Mammary epithelial cell (primary cell): ENCODE measurements at regions of chr14 and their contacts with region 1.

Region 1: DNA sequence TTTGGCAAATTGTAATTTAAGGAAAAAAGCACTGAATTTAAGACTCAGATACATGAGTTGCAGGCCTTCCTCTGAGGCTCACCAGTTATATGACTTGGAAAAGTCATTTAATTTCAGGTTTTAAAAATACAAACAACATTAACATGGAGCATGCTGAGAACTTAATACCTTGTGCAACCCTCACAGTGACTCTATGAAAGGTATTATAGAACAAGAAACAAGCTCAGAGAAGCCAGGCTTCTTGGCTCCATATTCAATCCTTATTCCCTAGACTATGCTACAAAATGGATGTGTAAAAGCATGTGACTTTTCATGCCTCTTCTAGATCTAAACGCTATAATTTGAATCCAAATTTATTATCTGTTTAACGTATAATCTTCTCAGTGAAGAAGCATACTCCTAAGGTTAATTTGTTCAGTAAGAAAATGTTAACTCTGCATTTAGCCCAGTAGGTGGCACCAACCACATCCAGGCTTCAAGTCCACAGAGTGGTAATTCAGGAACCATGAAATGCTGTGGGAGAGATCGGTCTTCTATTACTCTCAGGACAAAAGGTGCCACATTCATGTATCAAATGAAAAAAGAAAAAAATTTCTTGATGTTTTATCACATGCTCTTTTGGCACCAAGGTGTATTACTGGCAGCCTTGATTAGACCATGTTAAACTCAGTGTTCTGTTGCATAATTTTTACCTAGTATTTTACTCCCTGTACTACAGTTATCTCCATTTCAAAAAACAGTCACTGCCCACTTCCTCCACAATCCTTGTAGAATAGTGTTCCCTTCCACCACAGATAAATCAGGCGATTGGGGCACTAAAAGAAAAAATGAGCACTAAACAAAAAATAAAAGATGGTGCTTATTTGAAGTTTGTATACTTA is 9.3 kb downstream of the CCDC196 start:
- DNase-seq: peak; percentile 63
- H3K4me3 ChIP-seq: peak overlapping the region in 2 of 3 experiments; percentile 37 to 41
- H3K27ac ChIP-seq: peak overlapping the region; percentile 1
- H3K4me1 ChIP-seq: peaks cover 8% of the 10 kb centered on the region
- H3K27me3 ChIP-seq: no peaks in the 10 kb centered on the region
- CTCF ChIP-seq: peak; percentile 79 to 84

Region 2: GRCh38 chr14:66206554-66206953 is 288.9 kb before region 1 on chr14:
- CTCF ChIA-PET with region 1: no interaction called
- dilution Hi-C with region 1: no loop called
- in situ Hi-C with region 1: no loop called
- intact Hi-C with region 1: no loop called
- DNase-seq: no peak
- H3K4me3 ChIP-seq: no peak overlapping the region
- H3K27ac ChIP-seq: no peak overlapping the region
- H3K4me1 ChIP-seq: no peaks in the 10 kb centered on the region
- H3K27me3 ChIP-seq: peaks cover 2% of the 10 kb centered on the region
- CTCF ChIP-seq: no peak

Region 3: GRCh38 chr14:66507722-66508546 is 12.5 kb after region 1 on chr14 and contains the start of gene GPHN:
- CTCF ChIA-PET with region 1: no interaction called
- dilution Hi-C with region 1: no loop called
- in situ Hi-C with region 1: no loop called
- intact Hi-C with region 1: loop called (anchors 1 kb)
- DNase-seq: peak; percentile 99
- H3K4me3 ChIP-seq: peak within 1 kb of the TSS; percentile 90 to 99 (median 95)
- H3K27ac ChIP-seq: peak within 1 kb of the TSS; percentile 68
- H3K4me1 ChIP-seq: peaks cover 10% of the 10 kb centered on the region
- H3K27me3 ChIP-seq: no peaks in the 10 kb centered on the region
- CTCF ChIP-seq: peak in 1 of 2 donors; percentile 44
- total RNA-seq, gene GPHN: 10.8 to 30.2 TPM

Region 4: DNA sequence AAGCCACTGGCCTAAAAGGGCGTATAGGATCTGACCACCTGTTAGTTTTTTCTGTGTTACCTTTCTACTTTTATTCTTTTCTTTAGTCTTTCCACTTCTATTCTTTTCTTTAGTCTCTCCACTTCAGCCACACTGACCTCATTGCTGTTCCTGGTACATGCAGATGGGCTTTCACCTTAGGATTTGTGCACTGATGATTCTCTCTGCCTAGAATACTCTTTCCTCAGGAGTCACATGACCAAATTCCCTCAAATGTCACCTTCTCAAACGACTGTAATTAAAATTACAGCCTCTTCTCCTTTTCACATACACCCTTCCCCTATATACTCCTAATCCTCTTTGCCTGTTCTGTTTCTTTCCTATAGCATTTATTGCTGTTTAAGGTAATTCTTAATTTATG is 48.5 kb after region 1 on chr14:
- CTCF ChIA-PET with region 1: no interaction called
- dilution Hi-C with region 1: no loop called
- in situ Hi-C with region 1: no loop called
- intact Hi-C with region 1: loop called (anchors 2 kb)
- DNase-seq: no peak
- H3K4me3 ChIP-seq: no peak overlapping the region
- H3K27ac ChIP-seq: no peak overlapping the region
- H3K4me1 ChIP-seq: no peaks in the 10 kb centered on the region
- H3K27me3 ChIP-seq: no peaks in the 10 kb centered on the region
- CTCF ChIP-seq: no peak

Region 5: DNA sequence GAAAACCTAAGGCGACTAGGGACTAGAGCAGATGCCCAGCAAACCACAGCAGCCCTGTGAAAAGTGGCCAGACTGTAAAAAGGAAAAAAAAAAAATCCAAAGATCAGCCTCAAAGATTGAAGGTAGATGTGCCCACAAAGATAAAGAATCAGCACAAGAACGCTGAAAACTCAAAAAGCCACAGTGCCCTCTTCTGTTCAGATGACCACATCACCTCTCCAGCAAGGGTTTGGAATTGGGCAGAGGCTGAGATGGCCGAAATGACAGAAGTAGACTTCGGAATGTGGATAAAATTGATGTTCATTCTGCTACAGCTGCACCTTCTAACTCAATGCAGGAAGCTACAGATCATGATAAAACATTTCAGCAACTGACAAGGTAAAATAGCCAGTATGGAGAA is 166.9 kb after region 1 on chr14:
- CTCF ChIA-PET with region 1: no interaction called
- dilution Hi-C with region 1: no loop called
- in situ Hi-C with region 1: no loop called
- intact Hi-C with region 1: loop called (anchors 1 kb)
- DNase-seq: peak; percentile 37
- H3K4me3 ChIP-seq: no peak overlapping the region
- H3K27ac ChIP-seq: no peak overlapping the region
- H3K4me1 ChIP-seq: no peaks in the 10 kb centered on the region
- H3K27me3 ChIP-seq: no peaks in the 10 kb centered on the region
- CTCF ChIP-seq: peak; percentile 56 to 59

Region 6: DNA sequence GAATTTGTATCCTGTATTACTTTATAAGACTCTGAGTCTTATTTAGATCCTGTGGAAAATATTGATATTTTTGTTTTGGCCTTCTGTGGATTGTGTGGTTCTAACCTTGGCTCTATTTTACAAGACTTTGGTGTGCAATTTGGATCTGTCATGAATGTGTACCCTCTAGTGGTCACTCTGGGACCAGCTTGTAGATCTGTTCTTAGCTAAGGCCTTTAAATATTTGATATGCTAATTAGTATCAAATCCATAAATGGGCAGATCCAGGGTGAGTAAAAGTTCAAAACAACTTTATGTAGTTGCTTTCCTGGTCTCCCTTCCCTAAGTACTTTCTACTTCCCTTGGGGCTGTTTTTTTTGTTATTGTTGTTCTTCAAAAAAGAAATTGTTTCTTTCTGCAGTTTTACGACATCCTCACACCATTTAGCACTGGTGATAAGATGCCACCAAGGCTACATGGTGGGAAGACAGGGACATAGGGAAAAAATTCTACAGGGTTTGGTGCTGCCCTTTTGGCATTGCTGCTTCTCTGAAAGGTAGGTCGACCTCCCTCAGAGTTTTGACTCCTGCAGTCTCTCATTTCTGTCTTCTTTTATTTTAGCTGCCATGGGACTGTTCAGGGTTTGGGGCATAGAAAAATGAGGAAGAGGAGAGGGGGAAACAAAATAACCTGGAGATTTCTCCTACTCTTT is 251.0 kb after region 1 on chr14:
- CTCF ChIA-PET with region 1: no interaction called
- dilution Hi-C with region 1: no loop called
- in situ Hi-C with region 1: no loop called
- intact Hi-C with region 1: loop called (anchors 2 kb)
- DNase-seq: peak; percentile 28
- H3K4me3 ChIP-seq: no peak overlapping the region
- H3K27ac ChIP-seq: no peak overlapping the region
- H3K4me1 ChIP-seq: no peaks in the 10 kb centered on the region
- H3K27me3 ChIP-seq: no peaks in the 10 kb centered on the region
- CTCF ChIP-seq: peak; percentile 65 to 75

Region 7: GRCh38 chr14:67111022-67111421 is 615.6 kb after region 1 on chr14:
- CTCF ChIA-PET with region 1: no interaction called
- dilution Hi-C with region 1: no loop called
- in situ Hi-C with region 1: no loop called
- intact Hi-C with region 1: loop called (anchors 5 kb)
- DNase-seq: no peak
- H3K4me3 ChIP-seq: no peak overlapping the region
- H3K27ac ChIP-seq: no peak overlapping the region
- H3K4me1 ChIP-seq: no peaks in the 10 kb centered on the region
- H3K27me3 ChIP-seq: no peaks in the 10 kb centered on the region
- CTCF ChIP-seq: no peak

Region 8: DNA sequence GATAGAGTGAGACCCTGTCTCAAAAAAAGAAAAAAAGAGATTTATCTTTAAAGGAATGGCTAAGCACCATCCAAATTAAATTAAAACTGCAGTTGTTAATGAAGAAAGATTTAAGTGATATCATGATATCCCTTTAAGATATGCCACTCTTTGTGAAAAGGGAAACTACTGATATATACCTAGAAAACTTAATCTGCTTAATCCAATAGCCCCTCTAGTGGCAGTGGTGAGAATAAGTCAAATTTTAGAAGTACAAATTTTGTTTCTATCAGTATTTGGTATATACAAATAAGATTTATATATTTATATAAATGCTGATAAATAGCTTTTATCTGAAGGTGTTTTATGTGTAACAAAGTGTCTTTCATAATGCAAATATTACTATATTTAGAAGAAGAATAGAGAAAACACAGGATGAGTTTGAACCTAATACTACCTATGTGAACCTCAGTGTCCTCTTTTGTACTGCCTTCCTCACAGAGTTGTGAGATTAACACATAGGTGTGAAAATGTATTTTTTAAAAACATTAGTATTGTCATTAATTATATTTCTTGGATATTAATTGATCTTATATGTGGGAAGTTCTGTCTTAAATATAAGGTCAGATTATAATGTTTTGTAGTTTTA is 642.4 kb after region 1 on chr14:
- CTCF ChIA-PET with region 1: no interaction called
- dilution Hi-C with region 1: no loop called
- in situ Hi-C with region 1: no loop called
- intact Hi-C with region 1: loop called (anchors 5 kb)
- DNase-seq: peak; percentile 6
- H3K4me3 ChIP-seq: no peak overlapping the region
- H3K27ac ChIP-seq: no peak overlapping the region
- H3K4me1 ChIP-seq: no peaks in the 10 kb centered on the region
- H3K27me3 ChIP-seq: no peaks in the 10 kb centered on the region
- CTCF ChIP-seq: peak; percentile 47 to 52